Right cardiac atrium (tissue), 5 donors: ENCODE measurements at regions of chr14 and their contacts with region 1.

Region 1: GRCh38 chr14:35285168-35286002 is 6.8 kb upstream of the PSMA6 start:
- DNase-seq: no peak
- ATAC-seq: peak; percentile 29 to 70
- H3K4me3 ChIP-seq: no peak overlapping the region
- H3K27ac ChIP-seq: no peak overlapping the region
- H3K4me1 ChIP-seq: peaks cover 2% of the 10 kb centered on the region
- H3K27me3 ChIP-seq: no peaks in the 10 kb centered on the region

Region 2: GRCh38 chr14:35229495-35230089 is 55.8 kb before region 1 on chr14:
- intact Hi-C with region 1: loop called in 1 of 4 experiments (anchors 10 kb)
- DNase-seq: no peak
- ATAC-seq: no peak
- H3K4me3 ChIP-seq: no peak overlapping the region
- H3K27ac ChIP-seq: no peak overlapping the region
- H3K4me1 ChIP-seq: no peaks in the 10 kb centered on the region
- H3K27me3 ChIP-seq: no peaks in the 10 kb centered on the region